Gastrocnemius medialis (tissue), 4 donors: ENCODE measurements at regions of chr15 and their contacts with region 1.

Region 1: GRCh38 chr15:99928429-99928981 is 195.3 kb upstream of the LYSMD4 start:
- DNase-seq: peak; percentile 64
- ATAC-seq: peak; percentile 88 to 91
- H3K4me3 ChIP-seq: peak overlapping the region; percentile 32 to 76 (median 46)
- H3K27ac ChIP-seq: peak overlapping the region; percentile 39 to 84 (median 61)
- H3K4me1 ChIP-seq: peaks cover 0 to 6% of the 10 kb centered on the region in 2 donors
- H3K27me3 ChIP-seq: no peaks in the 10 kb centered on the region
- CTCF ChIP-seq: peak; percentile 25 to 78 (median 72)
- POLR2A ChIP-seq: no peak

Region 2: GRCh38 chr15:99788183-99788582 is 140.3 kb before region 1 on chr15:
- in situ Hi-C with region 1: no loop called
- intact Hi-C with region 1: no loop called
- DNase-seq: no peak
- ATAC-seq: no peak
- H3K4me3 ChIP-seq: no peak overlapping the region
- H3K27ac ChIP-seq: no peak overlapping the region
- H3K4me1 ChIP-seq: no peaks in the 10 kb centered on the region
- H3K27me3 ChIP-seq: no peaks in the 10 kb centered on the region
- CTCF ChIP-seq: no peak
- POLR2A ChIP-seq: no peak

Region 3: GRCh38 chr15:99857836-99858235 is 70.7 kb before region 1 on chr15:
- in situ Hi-C with region 1: no loop called
- intact Hi-C with region 1: no loop called
- DNase-seq: no peak
- ATAC-seq: no peak
- H3K4me3 ChIP-seq: no peak overlapping the region
- H3K27ac ChIP-seq: no peak overlapping the region
- H3K4me1 ChIP-seq: no peaks in the 10 kb centered on the region
- H3K27me3 ChIP-seq: no peaks in the 10 kb centered on the region
- CTCF ChIP-seq: no peak
- POLR2A ChIP-seq: no peak

Region 4: GRCh38 chr15:100131321-100132224 is 203.1 kb after region 1 on chr15:
- in situ Hi-C with region 1: loop called in 3 of 4 experiments (anchors 10 to 25 kb)
- intact Hi-C with region 1: loop called (anchors 2 kb)
- DNase-seq: peak in 1 of 2 donors; percentile 26
- ATAC-seq: peak; percentile 41 to 60
- H3K4me3 ChIP-seq: peak overlapping the region in 3 of 4 donors; percentile 7 to 34 (median 17)
- H3K27ac ChIP-seq: no peak overlapping the region
- H3K4me1 ChIP-seq: no peaks in the 10 kb centered on the region
- H3K27me3 ChIP-seq: no peaks in the 10 kb centered on the region
- CTCF ChIP-seq: peak in 3 of 5 experiments; percentile 27 to 53 (median 51)
- POLR2A ChIP-seq: no peak

Region 5: GRCh38 chr15:100341662-100342560 is 413.4 kb after region 1 on chr15 and contains the start of gene ADAMTS17:
- in situ Hi-C with region 1: loop called (anchors 5 to 10 kb)
- intact Hi-C with region 1: loop called (anchors 2 kb)
- DNase-seq: peak; percentile 96 to 97
- ATAC-seq: peak; percentile 98 to 99
- H3K4me3 ChIP-seq: peak within 1 kb of the TSS; percentile 65 to 96 (median 76)
- H3K27ac ChIP-seq: peak within 1 kb of the TSS; percentile 78 to 90 (median 88)
- H3K4me1 ChIP-seq: peaks cover 7 to 10% of the 10 kb centered on the region in 2 donors
- H3K27me3 ChIP-seq: no peaks in the 10 kb centered on the region
- CTCF ChIP-seq: peak; percentile 85 to 98 (median 95)
- POLR2A ChIP-seq: peak; percentile 94 to 99
- total RNA-seq, gene ADAMTS17: 5.0 to 16.2 (median 11.6) TPM

Region 6: GRCh38 chr15:100602064-100602822 is 673.7 kb after region 1 on chr15 and contains the starts of genes ASB7 and LINS1:
- in situ Hi-C with region 1: loop called in 1 of 4 experiments (anchors 25 kb)
- intact Hi-C with region 1: loop called (anchors 10 kb)
- DNase-seq: peak; percentile 100
- ATAC-seq: peak; percentile 96 to 97
- H3K4me3 ChIP-seq: peak within 1 kb of the TSS; percentile 82 to 98 (median 96)
- H3K27ac ChIP-seq: peak within 1 kb of the TSS; percentile 85 to 94 (median 92)
- H3K4me1 ChIP-seq: peaks cover 32 to 44% of the 10 kb centered on the region in 2 donors
- H3K27me3 ChIP-seq: no peaks in the 10 kb centered on the region
- CTCF ChIP-seq: no peak
- POLR2A ChIP-seq: peak; percentile 35 to 49
- total RNA-seq, gene ASB7: 5.1 to 10.3 (median 6.3) TPM
- total RNA-seq, gene LINS1: 3.2 to 11.9 (median 10.3) TPM